Activated B cell treated with CpG ODN at 0.5 μM for 24 hours (primary cell): ENCODE measurements at regions of chr11 and their contacts with region 1.

Region 1: GRCh38 chr11:4181782-4182721 is 87.5 kb downstream of the RRM1 start:
- DNase-seq: no peak
- ATAC-seq: no peak
- H3K4me3 Mint-ChIP-seq: no peak overlapping the region
- H3K27ac Mint-ChIP-seq: no peak overlapping the region
- H3K4me1 Mint-ChIP-seq: no peaks in the 10 kb centered on the region
- H3K27me3 Mint-ChIP-seq: peaks cover 4% of the 10 kb centered on the region
- CTCF ChIP-seq: no peak

Region 2: DNA sequence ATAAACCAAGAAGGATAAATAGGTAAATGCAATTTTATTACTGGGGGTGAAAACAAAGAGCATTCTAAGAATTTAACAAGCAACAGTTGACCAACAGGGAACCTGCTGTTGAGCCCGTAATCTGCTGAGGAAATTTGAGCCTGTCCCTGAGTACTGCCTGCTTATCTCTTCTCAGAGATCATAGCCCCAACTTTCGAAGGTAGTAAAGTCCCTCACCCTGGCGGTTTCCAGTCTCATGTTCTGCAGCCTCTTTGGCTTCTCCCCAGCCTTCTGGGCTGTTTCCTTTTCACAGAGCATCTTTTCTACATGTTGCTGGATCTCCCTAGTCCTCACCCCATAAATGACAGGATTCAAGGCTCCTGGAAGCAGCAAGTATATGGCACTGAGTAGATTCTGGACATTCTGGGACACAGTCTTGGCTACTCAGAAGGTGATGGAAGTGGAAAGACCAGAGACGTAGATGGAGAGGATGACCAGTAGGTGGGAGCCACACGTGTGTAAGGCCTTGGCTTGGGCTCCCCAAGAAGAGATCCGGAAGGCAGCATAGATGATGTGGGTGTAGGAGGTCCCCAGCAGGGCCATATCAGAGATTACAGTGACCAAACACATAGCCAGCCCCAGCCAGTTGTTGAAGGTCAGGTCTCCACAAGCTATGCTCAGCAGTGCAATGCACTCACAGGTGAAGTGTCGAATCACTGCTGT is 35.8 kb before region 1 on chr11:
- CTCF ChIA-PET with region 1: interaction called, 3 read pairs
- POLR2A ChIA-PET with region 1: no interaction called
- intact Hi-C with region 1: loop called (anchors 1 kb)
- DNase-seq: no peak
- ATAC-seq: no peak
- H3K4me3 Mint-ChIP-seq: no peak overlapping the region
- H3K27ac Mint-ChIP-seq: no peak overlapping the region
- H3K4me1 Mint-ChIP-seq: no peaks in the 10 kb centered on the region
- H3K27me3 Mint-ChIP-seq: no peaks in the 10 kb centered on the region
- CTCF ChIP-seq: no peak